Stomach (tissue), 19 donors: ENCODE measurements at regions of chr6 and their contacts with region 1.

Region 1: DNA sequence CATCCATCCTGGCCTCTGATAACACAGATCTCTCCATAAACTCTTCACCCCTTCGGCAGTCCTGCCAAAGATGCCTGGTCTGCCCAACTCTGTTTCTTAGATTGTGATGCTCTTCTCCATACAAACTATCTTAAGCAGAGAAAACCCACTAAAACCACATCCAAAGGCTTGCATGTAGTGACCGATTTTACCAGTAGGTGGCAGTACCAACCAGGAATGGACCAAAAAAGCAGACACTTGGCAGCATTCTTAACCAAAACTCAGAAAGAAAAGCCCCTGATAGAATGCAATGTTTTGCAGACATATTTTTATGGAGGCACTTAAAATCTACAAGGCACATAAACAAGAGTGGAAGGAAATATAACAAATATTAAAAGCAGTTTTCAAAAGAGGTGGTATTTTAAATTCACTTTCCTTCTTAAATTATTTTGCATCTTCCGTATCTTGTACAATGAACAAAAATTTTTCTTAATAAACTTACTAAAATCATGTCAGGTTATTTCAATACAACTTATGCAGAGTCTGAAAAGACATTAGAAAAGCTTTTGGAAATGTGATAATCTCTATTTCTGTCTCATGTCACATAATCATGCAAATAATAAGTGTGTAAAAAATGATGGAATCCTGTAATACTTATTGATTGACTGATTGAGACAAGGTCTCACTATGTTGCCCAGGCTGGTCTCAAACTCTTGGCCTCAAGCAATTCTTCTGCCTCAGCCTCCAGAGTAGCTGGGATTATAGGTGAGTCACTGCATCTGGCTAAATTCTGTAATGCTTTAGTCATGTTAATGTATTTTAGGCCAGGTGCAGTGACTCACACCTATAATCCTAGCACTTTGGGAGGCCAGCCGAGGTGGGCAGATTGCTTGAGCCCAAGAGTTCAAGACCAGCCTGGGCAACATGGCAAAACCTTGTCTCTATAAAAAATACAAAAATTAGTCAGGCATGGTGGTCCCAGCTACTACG is 29.4 kb downstream of the LRP11 start:
- DNase-seq: peak; percentile 61 to 86
- H3K4me3 ChIP-seq: no peak overlapping the region
- H3K27ac ChIP-seq: no peak overlapping the region
- H3K4me1 ChIP-seq: peaks cover 0 to 4% (median under 1%) of the 10 kb centered on the region in 4 donors
- H3K27me3 ChIP-seq: no peaks in the 10 kb centered on the region
- CTCF ChIP-seq: peak in 5 of 7 experiments; percentile 88 to 91 (median 90)
- EP300 ChIP-seq: no peak
- POLR2A ChIP-seq: no peak

Region 2: GRCh38 chr6:149925974-149926777 is 91.4 kb after region 1 on chr6:
- intact Hi-C with region 1: loop called (anchors 5 kb)
- DNase-seq: peak; percentile 92 to 93
- H3K4me3 ChIP-seq: peak overlapping the region; percentile 44 to 60 (median 53)
- H3K27ac ChIP-seq: peak overlapping the region in 3 of 5 donors; percentile 38 to 45 (median 39)
- H3K4me1 ChIP-seq: peaks cover 14 to 32% (median 29%) of the 10 kb centered on the region in 4 donors
- H3K27me3 ChIP-seq: peaks cover 0 to 81% (median 20%) of the 10 kb centered on the region in 3 donors
- CTCF ChIP-seq: peak in 5 of 7 experiments; percentile 93 to 99 (median 95)
- EP300 ChIP-seq: no peak
- POLR2A ChIP-seq: no peak

Region 3: DNA sequence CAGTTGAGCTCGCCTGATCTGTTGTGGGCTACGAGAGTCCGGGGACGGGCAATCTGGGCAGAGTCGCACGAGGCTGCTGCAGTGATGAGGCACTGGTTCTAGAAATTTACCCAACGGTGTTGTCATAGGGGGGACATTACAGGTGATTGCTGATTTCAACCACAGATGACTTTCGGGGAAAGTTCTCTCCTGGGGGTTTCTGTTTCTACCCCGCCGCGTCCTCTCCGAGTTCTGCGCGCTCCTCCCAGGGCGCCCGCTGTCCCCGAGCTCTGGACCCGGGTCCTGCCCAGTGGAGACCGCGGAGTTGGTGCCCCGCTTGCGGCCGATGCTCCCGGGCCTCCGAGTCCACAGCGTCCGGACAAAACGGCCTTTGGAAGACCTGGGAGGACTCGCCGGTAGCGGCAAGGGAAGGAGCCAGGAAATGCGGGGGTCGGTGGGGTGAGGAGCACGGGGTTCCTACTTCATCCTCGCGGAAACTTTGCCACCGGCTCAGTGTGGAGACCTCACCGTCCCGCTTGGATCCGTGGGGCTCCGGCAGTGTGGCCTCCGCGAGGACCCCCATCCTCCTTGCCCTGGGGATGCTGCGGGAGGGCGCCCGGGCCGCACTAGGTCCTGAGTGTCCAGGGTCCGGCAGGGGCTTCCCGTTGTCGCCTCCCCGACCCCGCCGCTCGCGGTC is 202.9 kb after region 1 on chr6:
- intact Hi-C with region 1: loop called (anchors 10 kb)
- DNase-seq: peak in 1 of 2 donors; percentile 15
- H3K4me3 ChIP-seq: peak overlapping the region; percentile 8 to 43 (median 24)
- H3K27ac ChIP-seq: no peak overlapping the region
- H3K4me1 ChIP-seq: peaks cover 10 to 15% (median 15%) of the 10 kb centered on the region in 4 donors
- H3K27me3 ChIP-seq: peaks cover 21 to 85% (median 63%) of the 10 kb centered on the region in 3 donors
- CTCF ChIP-seq: no peak
- EP300 ChIP-seq: no peak
- POLR2A ChIP-seq: no peak